Mammary epithelial cell (primary cell): ENCODE measurements at regions of chr19 and their contacts with region 1.

Region 1: GRCh38 chr19:8224394-8225145 is 15.4 kb downstream of the CERS4 start:
- DNase-seq: peak; percentile 90
- H3K4me3 ChIP-seq: peak overlapping the region in 1 of 3 experiments; percentile 28
- H3K27ac ChIP-seq: peak overlapping the region; percentile 21
- H3K4me1 ChIP-seq: peaks cover 9% of the 10 kb centered on the region
- H3K27me3 ChIP-seq: no peaks in the 10 kb centered on the region
- CTCF ChIP-seq: no peak

Region 2: GRCh38 chr19:8017808-8018207 is 206.8 kb before region 1 on chr19:
- CTCF ChIA-PET with region 1: no interaction called
- dilution Hi-C with region 1: no loop called
- in situ Hi-C with region 1: no loop called
- intact Hi-C with region 1: no loop called
- DNase-seq: no peak
- H3K4me3 ChIP-seq: no peak overlapping the region
- H3K27ac ChIP-seq: no peak overlapping the region
- H3K4me1 ChIP-seq: no peaks in the 10 kb centered on the region
- H3K27me3 ChIP-seq: no peaks in the 10 kb centered on the region
- CTCF ChIP-seq: no peak

Region 3: GRCh38 chr19:8238251-8238650 is 13.7 kb after region 1 on chr19:
- CTCF ChIA-PET with region 1: interaction called, 3 read pairs
- dilution Hi-C with region 1: no loop called
- in situ Hi-C with region 1: no loop called
- intact Hi-C with region 1: loop called (anchors 1 kb)
- DNase-seq: peak; percentile 42
- H3K4me3 ChIP-seq: peak overlapping the region in 1 of 3 experiments; percentile 12
- H3K27ac ChIP-seq: no peak overlapping the region
- H3K4me1 ChIP-seq: peaks cover 24% of the 10 kb centered on the region
- H3K27me3 ChIP-seq: no peaks in the 10 kb centered on the region
- CTCF ChIP-seq: no peak

Region 4: GRCh38 chr19:8261347-8262310 is 37.1 kb after region 1 on chr19:
- CTCF ChIA-PET with region 1: no interaction called
- dilution Hi-C with region 1: no loop called
- in situ Hi-C with region 1: no loop called
- intact Hi-C with region 1: no loop called
- DNase-seq: no peak
- H3K4me3 ChIP-seq: no peak overlapping the region
- H3K27ac ChIP-seq: no peak overlapping the region
- H3K4me1 ChIP-seq: no peaks in the 10 kb centered on the region
- H3K27me3 ChIP-seq: no peaks in the 10 kb centered on the region
- CTCF ChIP-seq: no peak

Region 5: GRCh38 chr19:8697671-8698432 is 473.3 kb after region 1 on chr19:
- CTCF ChIA-PET with region 1: no interaction called
- dilution Hi-C with region 1: no loop called
- in situ Hi-C with region 1: no loop called
- intact Hi-C with region 1: no loop called
- DNase-seq: no peak
- H3K4me3 ChIP-seq: no peak overlapping the region
- H3K27ac ChIP-seq: no peak overlapping the region
- H3K4me1 ChIP-seq: no peaks in the 10 kb centered on the region
- H3K27me3 ChIP-seq: no peaks in the 10 kb centered on the region
- CTCF ChIP-seq: no peak